Posterior vena cava (tissue), 2 donors: ENCODE measurements at regions of chr17 and their contacts with region 1.

Region 1: GRCh38 chr17:72338847-72339790 is 218.3 kb downstream of the SOX9 start:
- DNase-seq: no peak

Region 2: DNA sequence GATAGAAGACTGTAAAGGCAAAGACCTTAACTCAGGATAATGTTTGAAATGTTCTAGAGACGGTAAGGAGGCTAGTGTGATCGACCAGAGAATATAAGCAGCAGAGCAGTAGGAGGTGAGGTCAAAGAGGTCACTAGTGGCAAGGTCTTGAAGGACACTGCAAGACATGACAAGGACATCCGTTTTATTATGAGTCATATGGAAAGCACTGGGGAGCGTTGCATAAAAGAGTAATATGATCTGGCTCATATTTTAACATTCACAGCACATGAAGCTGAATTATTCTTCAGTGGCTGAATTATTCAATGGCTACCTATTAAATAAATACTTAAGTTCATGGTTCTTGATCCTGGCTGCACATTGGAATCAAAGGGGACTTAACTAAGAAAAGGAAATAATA is 94.6 kb before region 1 on chr17:
- intact Hi-C with region 1: no loop called
- DNase-seq: no peak

Region 3: GRCh38 chr17:73324160-73324475 is 985.0 kb after region 1 on chr17:
- intact Hi-C with region 1: loop called in 1 of 2 experiments (anchors 5 kb)
- DNase-seq: no peak